Activated B cell treated with CpG ODN at 0.5 μM for 24 hours (primary cell): ENCODE measurements at regions of chr2 and their contacts with region 1.

Region 1: DNA sequence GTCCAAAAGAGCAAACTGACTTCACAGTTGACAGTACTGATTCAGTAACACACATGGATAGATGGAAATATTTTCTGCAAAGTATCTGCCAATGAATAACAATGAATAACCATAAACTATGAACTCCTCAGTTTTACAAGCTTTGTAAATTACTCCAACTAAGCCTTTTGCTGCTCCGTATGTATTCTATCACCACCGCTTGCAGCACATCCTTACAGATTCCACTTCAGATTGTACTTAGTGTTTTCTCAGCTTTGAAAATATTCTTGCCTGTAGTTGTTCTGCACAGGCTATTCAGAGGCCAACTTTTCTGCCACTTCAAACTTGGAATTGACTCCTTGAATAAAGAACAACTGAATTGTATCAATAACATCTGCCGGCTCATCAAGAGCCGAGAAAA is 36.2 kb downstream of the TLK1 start:
- DNase-seq: no peak
- ATAC-seq: no peak
- H3K4me3 Mint-ChIP-seq: no peak overlapping the region
- H3K27ac Mint-ChIP-seq: no peak overlapping the region
- H3K4me1 Mint-ChIP-seq: peaks cover 72% of the 10 kb centered on the region
- H3K27me3 Mint-ChIP-seq: no peaks in the 10 kb centered on the region
- CTCF ChIP-seq: no peak

Region 2: GRCh38 chr2:171146633-171147032 is 22.1 kb after region 1 on chr2:
- CTCF ChIA-PET with region 1: no interaction called
- POLR2A ChIA-PET with region 1: no interaction called
- intact Hi-C with region 1: loop called (anchors 2 kb)
- DNase-seq: no peak
- ATAC-seq: peak; percentile 47
- H3K4me3 Mint-ChIP-seq: peak overlapping the region; percentile 36
- H3K27ac Mint-ChIP-seq: peak overlapping the region; percentile 80
- H3K4me1 Mint-ChIP-seq: peaks cover 80% of the 10 kb centered on the region
- H3K27me3 Mint-ChIP-seq: no peaks in the 10 kb centered on the region
- CTCF ChIP-seq: no peak

Region 3: GRCh38 chr2:172293956-172294355 is 1169.4 kb after region 1 on chr2:
- CTCF ChIA-PET with region 1: no interaction called
- POLR2A ChIA-PET with region 1: no interaction called
- intact Hi-C with region 1: no loop called
- DNase-seq: no peak
- ATAC-seq: no peak
- H3K4me3 Mint-ChIP-seq: no peak overlapping the region
- H3K27ac Mint-ChIP-seq: no peak overlapping the region
- H3K4me1 Mint-ChIP-seq: no peaks in the 10 kb centered on the region
- H3K27me3 Mint-ChIP-seq: peaks cover 14% of the 10 kb centered on the region
- CTCF ChIP-seq: no peak